Activated CD4-positive, alpha-beta T cell treated with anti-CD3 and anti-CD28 coated beads, Interleukin-2, amount 10 ng/mL, durations not matched to agents 24 days and 14 days (primary cell): ENCODE measurements at regions of chr12 and their contacts with region 1.

Region 1: GRCh38 chr12:49288412-49288853 is 6.5 kb upstream of the PRPH start:
- DNase-seq: peak; percentile 93
- H3K4me3 Mint-ChIP-seq: no peak overlapping the region
- H3K27ac Mint-ChIP-seq: no peak overlapping the region
- H3K4me1 Mint-ChIP-seq: peaks cover 6% of the 10 kb centered on the region
- H3K27me3 Mint-ChIP-seq: peaks cover 36% of the 10 kb centered on the region

Region 2: DNA sequence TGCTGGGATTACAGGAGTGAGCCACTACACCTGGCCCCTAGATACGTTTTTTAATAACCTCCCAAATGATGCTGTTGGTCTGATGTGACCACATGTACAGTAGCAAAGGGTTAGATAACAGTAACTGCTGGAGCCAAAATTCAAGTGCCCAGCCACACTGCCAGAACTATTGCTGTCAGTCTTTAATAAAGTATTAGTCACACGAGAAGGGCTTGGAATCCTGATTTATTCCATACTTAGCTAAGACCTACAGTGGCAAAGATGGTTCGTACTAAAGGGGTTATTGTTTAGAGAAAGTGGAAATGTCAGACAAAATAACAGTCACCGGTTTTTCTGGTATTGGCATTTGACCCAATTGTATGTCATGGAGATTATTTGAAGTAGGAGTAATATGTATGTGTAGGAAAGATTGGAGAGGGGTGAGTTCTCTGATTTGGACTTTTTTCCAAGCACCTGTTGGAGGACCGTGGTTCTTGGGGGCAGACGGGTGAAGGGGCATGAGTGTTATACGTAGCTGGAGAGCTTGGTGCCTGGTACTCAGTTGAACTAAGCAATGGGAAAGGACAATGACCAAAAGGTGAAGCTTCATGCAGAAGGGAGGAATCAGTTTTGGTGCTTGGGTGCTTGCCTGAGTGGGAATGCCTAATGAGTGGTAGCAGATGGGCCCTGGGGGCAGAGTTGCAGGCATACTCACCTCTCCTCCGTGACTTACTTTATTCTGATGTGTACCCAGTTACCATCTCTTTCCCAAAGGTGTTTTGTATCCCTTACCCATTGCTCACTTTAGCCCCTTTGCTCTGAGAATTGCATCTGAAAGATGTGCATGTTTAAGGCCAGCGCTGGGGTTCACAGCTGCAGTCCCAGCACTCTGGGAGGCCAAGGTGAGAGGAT is 13.8 kb before region 1 on chr12:
- intact Hi-C with region 1: no loop called
- DNase-seq: no peak
- H3K4me3 Mint-ChIP-seq: no peak overlapping the region
- H3K27ac Mint-ChIP-seq: no peak overlapping the region
- H3K4me1 Mint-ChIP-seq: peaks cover 6% of the 10 kb centered on the region
- H3K27me3 Mint-ChIP-seq: peaks cover 5% of the 10 kb centered on the region

Region 3: GRCh38 chr12:49342066-49342913 is 53.9 kb after region 1 on chr12:
- intact Hi-C with region 1: loop called (anchors 1 kb)
- DNase-seq: peak; percentile 92
- H3K4me3 Mint-ChIP-seq: peak overlapping the region; percentile 68
- H3K27ac Mint-ChIP-seq: no peak overlapping the region
- H3K4me1 Mint-ChIP-seq: peaks cover 37% of the 10 kb centered on the region
- H3K27me3 Mint-ChIP-seq: peaks cover 84% of the 10 kb centered on the region

Region 4: DNA sequence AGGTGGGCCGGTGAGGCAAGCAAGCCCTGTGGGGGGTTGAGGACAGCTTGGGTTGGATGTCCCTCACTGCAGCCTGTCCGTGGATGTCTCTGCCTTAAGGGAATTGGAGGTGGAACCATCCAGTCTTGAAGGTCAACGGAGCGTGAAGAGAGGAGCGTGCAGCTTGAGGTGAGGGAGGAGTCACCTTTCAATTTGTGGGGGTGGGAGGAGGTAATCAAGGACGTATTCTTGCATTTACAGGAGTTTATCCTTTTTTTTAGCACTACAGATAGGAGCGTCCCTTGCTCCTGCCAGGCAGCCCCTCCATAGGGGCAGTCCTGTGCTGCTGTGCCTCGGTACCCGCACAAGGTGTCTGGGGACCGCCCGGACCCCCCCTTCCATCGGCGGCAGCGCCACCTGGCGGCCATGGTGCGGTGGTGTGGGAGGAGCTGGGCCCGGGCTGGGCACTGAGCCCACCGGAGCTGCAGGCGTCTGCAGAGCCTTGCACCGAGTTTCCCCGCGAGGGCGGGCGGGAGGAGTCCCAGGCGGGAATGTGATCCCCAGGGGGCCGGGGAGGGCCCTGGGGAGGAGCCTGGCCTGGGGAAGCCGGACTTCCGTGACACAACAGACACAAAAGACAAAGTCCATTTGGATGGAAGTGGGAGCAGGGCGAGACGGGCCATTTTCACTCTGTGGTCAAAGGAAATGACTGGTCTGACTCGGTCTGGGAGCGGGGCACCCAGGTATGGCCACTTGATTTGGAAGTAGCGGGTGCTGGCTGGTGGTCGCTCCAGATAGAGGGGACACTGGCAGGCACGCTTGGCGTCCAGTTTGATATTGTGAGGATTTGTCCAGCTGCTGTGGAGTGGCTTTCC is 59.2 kb after region 1 on chr12:
- intact Hi-C with region 1: loop called (anchors 1 kb)
- DNase-seq: peak; percentile 94
- H3K4me3 Mint-ChIP-seq: peak overlapping the region; percentile 84
- H3K27ac Mint-ChIP-seq: peak overlapping the region; percentile 67
- H3K4me1 Mint-ChIP-seq: peaks cover 30% of the 10 kb centered on the region
- H3K27me3 Mint-ChIP-seq: peaks cover 66% of the 10 kb centered on the region

Region 5: DNA sequence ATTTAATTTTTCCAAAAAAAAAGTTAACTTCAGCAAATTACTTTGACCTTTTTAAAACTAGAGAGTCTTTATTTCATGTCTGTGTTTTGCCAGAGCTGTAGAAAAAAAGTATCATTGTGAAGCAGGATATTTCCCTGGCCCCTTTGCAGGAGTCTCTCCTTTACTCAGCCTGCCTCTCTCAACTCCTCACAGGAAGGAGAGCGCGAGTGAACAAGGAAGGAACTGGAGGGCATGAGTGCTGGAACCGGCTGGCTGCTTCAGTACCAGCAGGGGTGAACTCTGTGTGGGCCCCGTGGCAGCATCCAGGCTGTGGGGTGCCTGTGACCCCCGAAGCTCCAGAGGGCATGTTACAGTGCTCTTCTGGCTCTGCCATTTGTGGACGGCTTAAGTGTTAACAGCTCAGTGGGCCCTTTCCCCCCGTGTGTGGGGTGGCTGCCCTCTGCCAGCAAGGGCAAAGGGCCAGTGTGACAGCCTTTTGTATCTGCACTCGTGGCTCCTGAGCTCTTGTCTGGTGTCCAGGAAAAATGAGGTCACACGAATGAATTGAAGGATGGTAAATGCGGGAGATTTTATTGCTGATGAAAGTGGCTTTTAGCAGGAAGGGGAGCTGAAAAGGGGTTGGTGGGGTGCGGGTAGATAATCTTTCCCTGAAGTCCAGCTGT is 173.8 kb after region 1 on chr12:
- intact Hi-C with region 1: no loop called
- DNase-seq: no peak
- H3K4me3 Mint-ChIP-seq: no peak overlapping the region
- H3K27ac Mint-ChIP-seq: no peak overlapping the region
- H3K4me1 Mint-ChIP-seq: no peaks in the 10 kb centered on the region
- H3K27me3 Mint-ChIP-seq: no peaks in the 10 kb centered on the region

Region 6: DNA sequence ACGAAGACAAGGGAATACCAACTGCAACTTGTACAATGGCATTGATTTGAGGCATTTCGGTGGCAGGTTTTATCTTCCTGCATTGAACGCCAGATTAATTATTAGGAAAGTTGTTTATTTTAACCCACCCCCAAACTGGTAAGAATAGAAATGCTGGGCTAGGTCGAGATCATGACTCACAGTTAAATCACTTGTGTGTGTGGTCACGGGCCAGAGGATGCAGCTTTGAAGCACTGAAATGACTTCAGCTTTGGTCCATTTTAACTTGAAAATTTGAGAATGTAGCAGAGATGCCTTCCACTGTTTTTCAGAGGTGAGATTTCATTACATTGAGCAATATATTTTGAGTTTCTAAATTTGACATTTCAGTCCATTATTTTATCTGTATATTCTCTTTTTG is 226.8 kb after region 1 on chr12:
- intact Hi-C with region 1: loop called (anchors 5 kb)
- DNase-seq: no peak
- H3K4me3 Mint-ChIP-seq: no peak overlapping the region
- H3K27ac Mint-ChIP-seq: no peak overlapping the region
- H3K4me1 Mint-ChIP-seq: peaks cover 10% of the 10 kb centered on the region
- H3K27me3 Mint-ChIP-seq: no peaks in the 10 kb centered on the region